Kidney (tissue), 22 donors: ENCODE measurements at regions of chr17 and their contacts with region 1.

Region 1: GRCh38 chr17:40191237-40192208 is 14.3 kb downstream of the RAPGEFL1 start:
- DNase-seq: peak; percentile 83 to 93 (median 89)
- H3K4me3 ChIP-seq: peak overlapping the region; percentile 48 to 70 (median 58)
- H3K27ac ChIP-seq: no peak overlapping the region
- H3K4me1 ChIP-seq: peaks cover 0 to 2% (median 0%) of the 10 kb centered on the region in 3 donors
- H3K27me3 ChIP-seq: no peaks in the 10 kb centered on the region
- CTCF ChIP-seq: peak; percentile 66

Region 2: DNA sequence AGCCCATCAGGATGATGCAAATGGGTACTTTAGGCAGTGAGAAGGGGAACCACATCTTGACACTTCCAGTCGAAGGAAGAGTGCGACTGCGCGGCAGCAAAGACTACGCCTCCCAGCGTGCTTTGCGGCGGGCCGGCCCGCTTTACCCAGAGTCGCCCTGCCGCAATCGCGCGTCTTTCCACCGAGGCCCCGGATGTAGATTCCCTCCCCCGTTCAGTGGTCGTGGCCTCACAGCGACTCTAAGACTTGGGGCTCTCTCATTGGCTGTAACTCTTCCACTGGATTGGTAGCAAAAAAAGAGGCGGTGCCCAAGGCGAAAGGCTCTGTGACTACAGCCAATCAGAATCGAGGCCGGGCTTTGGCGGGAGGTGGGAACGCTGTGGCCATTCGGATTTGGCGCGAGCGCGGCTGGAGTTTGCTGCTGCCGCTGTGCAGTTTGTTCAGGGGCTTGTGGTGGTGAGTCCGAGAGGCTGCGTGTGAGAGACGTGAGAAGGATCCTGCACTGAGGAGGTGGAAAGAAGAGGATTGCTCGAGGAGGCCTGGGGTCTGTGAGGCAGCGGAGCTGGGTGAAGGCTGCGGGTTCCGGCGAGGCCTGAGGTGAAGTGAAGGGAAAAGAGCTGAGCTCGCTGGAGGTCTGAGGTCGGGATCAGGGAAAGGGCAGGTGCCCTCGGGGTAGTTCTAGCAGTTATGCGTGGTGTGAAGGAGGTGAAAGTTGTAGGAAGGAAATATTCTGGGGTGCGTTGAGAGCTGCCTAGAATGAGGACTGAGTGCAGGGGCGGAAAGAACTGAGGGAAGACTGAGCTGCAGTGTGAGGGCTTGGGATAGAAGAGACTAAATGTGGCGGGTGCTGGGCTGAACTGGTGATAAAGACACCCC is 96.2 kb after region 1 on chr17 and contains the start of gene CDC6:
- intact Hi-C with region 1: loop called (anchors 10 kb)
- DNase-seq: peak; percentile 99 to 100 (median 99)
- H3K4me3 ChIP-seq: peak within 1 kb of the TSS; percentile 73 to 89 (median 75)
- H3K27ac ChIP-seq: no peak within 1 kb of the TSS
- H3K4me1 ChIP-seq: peaks cover 0 to 13% (median 10%) of the 10 kb centered on the region in 3 donors
- H3K27me3 ChIP-seq: no peaks in the 10 kb centered on the region
- CTCF ChIP-seq: no peak
- total RNA-seq, gene CDC6: 1.7 TPM